Activated B cell treated with CpG ODN at 0.5 μM for 24 hours (primary cell): ENCODE measurements at regions of chr19 and their contacts with region 1.

Region 1: GRCh38 chr19:55407800-55408532 is 378 bp upstream of the UBE2S start:
- DNase-seq: peak; percentile 95
- ATAC-seq: peak; percentile 88
- H3K4me3 Mint-ChIP-seq: peak overlapping the region; percentile 91
- H3K27ac Mint-ChIP-seq: peak overlapping the region; percentile 98
- H3K4me1 Mint-ChIP-seq: peaks cover 24% of the 10 kb centered on the region
- H3K27me3 Mint-ChIP-seq: no peaks in the 10 kb centered on the region
- CTCF ChIP-seq: no peak

Region 2: GRCh38 chr19:54463531-54464043 is 944.4 kb before region 1 on chr19 and contains the start of gene LENG9:
- CTCF ChIA-PET with region 1: no interaction called
- POLR2A ChIA-PET with region 1: interaction called, 3 read pairs
- intact Hi-C with region 1: loop called (anchors 1 kb)
- DNase-seq: peak; percentile 85
- ATAC-seq: peak; percentile 61
- H3K4me3 Mint-ChIP-seq: peak within 1 kb of the TSS; percentile 82
- H3K27ac Mint-ChIP-seq: peak within 1 kb of the TSS; percentile 90
- H3K4me1 Mint-ChIP-seq: peaks cover 28% of the 10 kb centered on the region
- H3K27me3 Mint-ChIP-seq: no peaks in the 10 kb centered on the region
- CTCF ChIP-seq: no peak
- total RNA-seq, gene LENG9: 6.3 and 8.5 TPM in 2 replicates

Region 3: GRCh38 chr19:55279770-55280643 is 128.0 kb before region 1 on chr19 and contains the start of gene HSPBP1:
- CTCF ChIA-PET with region 1: no interaction called
- POLR2A ChIA-PET with region 1: interaction called, 17 read pairs
- intact Hi-C with region 1: no loop called
- DNase-seq: peak; percentile 97
- ATAC-seq: peak; percentile 83
- H3K4me3 Mint-ChIP-seq: peak within 1 kb of the TSS; percentile 100
- H3K27ac Mint-ChIP-seq: peak within 1 kb of the TSS; percentile 98
- H3K4me1 Mint-ChIP-seq: peaks cover 73% of the 10 kb centered on the region
- H3K27me3 Mint-ChIP-seq: peaks cover 4% of the 10 kb centered on the region
- CTCF ChIP-seq: no peak
- total RNA-seq, gene HSPBP1: 32.2 and 32.9 TPM in 2 replicates

Region 4: GRCh38 chr19:55339048-55339888 is 68.7 kb before region 1 on chr19 and contains the start of gene KMT5C:
- CTCF ChIA-PET with region 1: no interaction called
- POLR2A ChIA-PET with region 1: interaction called, 42 read pairs
- intact Hi-C with region 1: loop called (anchors 1 kb)
- DNase-seq: peak; percentile 99
- ATAC-seq: peak; percentile 81
- H3K4me3 Mint-ChIP-seq: peak within 1 kb of the TSS; percentile 95
- H3K27ac Mint-ChIP-seq: peak within 1 kb of the TSS; percentile 90
- H3K4me1 Mint-ChIP-seq: peaks cover 31% of the 10 kb centered on the region
- H3K27me3 Mint-ChIP-seq: peaks cover 7% of the 10 kb centered on the region
- CTCF ChIP-seq: no peak
- total RNA-seq, gene KMT5C: 7.2 and 8.1 TPM in 2 replicates

Region 5: DNA sequence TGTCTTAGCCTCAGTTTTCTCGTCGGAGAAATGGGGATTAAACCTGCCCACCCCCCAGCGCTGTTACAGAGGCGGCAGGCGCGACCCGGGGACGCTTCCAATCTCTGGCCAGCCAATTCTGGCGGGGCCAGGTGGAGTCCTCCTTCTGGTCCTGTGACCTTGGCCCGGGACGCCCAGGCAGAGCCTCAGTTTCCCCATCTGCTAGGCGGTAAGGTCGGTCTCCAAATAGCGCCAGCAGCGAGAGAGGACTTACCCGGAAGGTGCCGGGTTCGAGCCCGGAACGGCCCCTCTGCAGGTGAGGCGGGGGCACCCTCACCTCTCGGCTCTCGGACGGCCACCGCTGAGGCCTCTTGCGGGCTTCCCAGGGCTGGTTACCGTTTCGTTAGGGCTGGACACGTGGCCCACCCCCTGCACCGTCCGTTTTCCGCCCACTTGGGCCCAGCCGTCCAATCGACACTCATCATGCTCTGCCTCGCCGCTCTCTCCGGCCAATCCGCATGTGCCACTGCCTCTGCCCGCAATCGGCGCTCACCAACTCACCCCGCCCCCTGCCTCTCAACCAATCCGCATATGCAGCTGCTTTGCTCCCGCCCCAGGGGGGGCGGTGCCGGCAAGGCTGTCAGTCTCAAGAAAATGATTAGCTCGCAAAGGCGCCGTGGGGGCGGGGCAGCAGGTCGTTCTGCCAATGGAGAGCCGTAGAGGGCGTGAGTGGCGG is 53.5 kb after region 1 on chr19 and contains the start of gene ISOC2:
- CTCF ChIA-PET with region 1: no interaction called
- POLR2A ChIA-PET with region 1: interaction called, 15 read pairs
- intact Hi-C with region 1: loop called (anchors 1 kb)
- DNase-seq: peak; percentile 100
- ATAC-seq: peak; percentile 96
- H3K4me3 Mint-ChIP-seq: peak within 1 kb of the TSS; percentile 89
- H3K27ac Mint-ChIP-seq: peak within 1 kb of the TSS; percentile 82
- H3K4me1 Mint-ChIP-seq: peaks cover 22% of the 10 kb centered on the region
- H3K27me3 Mint-ChIP-seq: no peaks in the 10 kb centered on the region
- CTCF ChIP-seq: no peak
- total RNA-seq, gene ISOC2: 28.7 and 29.0 TPM in 2 replicates